GM18951 (cell line): ENCODE measurements at regions of chr2 and their contacts with region 1.

Region 1: DNA sequence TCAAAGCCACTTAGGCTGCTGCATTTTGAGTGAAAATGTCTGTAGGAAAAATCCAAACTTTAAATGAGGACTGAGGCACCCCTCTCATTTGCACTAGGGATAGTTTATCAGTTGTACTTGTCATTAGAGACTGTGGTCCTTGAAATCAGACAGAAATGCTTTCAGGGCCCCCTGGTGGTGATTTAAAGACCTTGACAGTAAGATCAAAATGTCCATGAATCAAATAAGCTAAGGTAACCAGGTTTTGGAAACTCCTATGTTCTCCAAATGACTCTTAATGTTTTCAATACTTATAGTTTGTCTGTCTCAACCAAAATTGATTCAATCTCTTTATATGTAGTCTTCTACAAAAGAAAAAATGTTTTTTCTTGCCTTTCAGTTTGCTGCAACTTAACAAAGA is 28.8 kb upstream of the DDX18 start:
- POLR2A ChIP-seq: no peak

Region 2: DNA sequence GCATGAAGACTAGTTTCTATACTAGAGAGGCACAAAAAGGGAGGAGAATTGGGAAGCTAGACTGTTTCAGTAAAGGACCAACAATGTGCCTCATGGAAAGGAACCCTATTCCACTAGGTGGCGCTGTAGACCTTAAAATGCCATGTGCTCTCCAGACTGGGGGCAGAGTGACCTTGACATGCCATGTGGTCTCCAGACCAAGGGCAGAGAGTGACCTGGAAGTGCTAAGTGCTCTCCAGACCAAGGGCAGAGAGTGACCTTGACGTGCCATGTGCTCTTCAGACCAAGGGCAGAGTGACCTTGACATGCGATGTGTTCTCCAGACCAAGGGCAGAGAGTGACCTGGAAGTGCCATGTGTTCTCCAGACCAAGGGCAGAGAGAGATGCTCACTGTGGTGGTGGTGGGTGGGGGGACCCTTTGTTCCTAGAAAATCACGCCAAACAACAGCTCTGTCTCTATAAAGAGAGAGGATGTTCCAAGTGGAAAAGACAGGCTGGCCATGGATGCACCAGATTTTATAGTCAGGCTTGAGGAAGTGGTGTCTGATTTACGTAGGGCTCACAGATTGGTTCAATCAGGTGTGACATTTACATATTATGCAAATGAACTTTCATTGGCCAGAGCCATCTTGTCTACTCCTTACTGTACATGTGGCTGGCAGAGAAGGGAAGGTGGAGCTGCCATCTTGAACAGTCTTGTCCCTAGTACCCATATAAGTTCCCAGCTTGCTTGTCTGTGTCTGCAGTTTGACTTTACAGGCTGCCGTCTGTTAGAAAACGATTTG is 315.2 kb before region 1 on chr2:
- in situ Hi-C with region 1: loop called (anchors 25 kb)
- POLR2A ChIP-seq: no peak

Region 3: GRCh38 chr2:117714745-117715417 is 70.9 kb before region 1 on chr2:
- in situ Hi-C with region 1: no loop called
- POLR2A ChIP-seq: no peak